ENCODE measurements at regions of chr6 and their contacts with region 1.

Region 1: GRCh38 chr6:114108119-114109002 is 137.4 kb upstream of the HDAC2 start:
- DNase-seq: peak; percentile 23
- H3K4me3 ChIP-seq: no peak overlapping the region
- H3K27ac ChIP-seq: no peak overlapping the region
- H3K4me1 ChIP-seq: no peaks in the 10 kb centered on the region; a peak in 2 of 4 replicates
- H3K27me3 ChIP-seq: no peaks in the 10 kb centered on the region; the same call in none of the 2 replicates
- CTCF ChIP-seq: peak; percentile 79
- EP300 ChIP-seq: no peak
- RAD21 ChIP-seq: peak; percentile 63

Region 2: DNA sequence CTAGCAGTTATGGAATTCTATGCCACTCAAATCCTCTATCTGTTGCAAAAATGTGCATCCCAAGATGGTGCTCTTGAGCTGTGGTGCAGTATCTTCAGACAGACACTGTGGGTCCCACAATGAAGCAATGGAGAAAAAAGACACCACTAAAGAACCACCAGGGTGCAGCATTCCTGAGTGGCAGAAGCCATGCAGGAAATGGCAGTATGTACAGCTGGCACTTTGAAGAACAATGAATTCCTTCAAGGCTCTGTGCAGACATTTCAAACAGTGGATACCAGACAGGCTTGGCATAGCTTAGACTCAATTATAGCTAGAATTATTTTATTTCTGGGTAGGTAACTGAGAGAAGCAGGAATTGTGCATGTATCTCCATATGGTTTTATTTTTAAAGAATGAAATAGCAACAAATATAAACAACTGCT is 113.4 kb before region 1 on chr6:
- CTCF ChIA-PET with region 1: interaction called, 26 read pairs
- POLR2A ChIA-PET with region 1: no interaction called
- DNase-seq: peak; percentile 44
- H3K4me3 ChIP-seq: peak overlapping the region in 1 of 2 experiments; percentile 46; a peak in 1 of 4 replicates
- H3K27ac ChIP-seq: peak overlapping the region; percentile 40 to 78; a peak in 3 of 4 replicates
- H3K4me1 ChIP-seq: peaks cover 9 to 24% of the 10 kb centered on the region in 2 experiments
- H3K27me3 ChIP-seq: no peaks in the 10 kb centered on the region
- CTCF ChIP-seq: peak; percentile 92
- EP300 ChIP-seq: no peak
- RAD21 ChIP-seq: peak; percentile 87

Region 3: DNA sequence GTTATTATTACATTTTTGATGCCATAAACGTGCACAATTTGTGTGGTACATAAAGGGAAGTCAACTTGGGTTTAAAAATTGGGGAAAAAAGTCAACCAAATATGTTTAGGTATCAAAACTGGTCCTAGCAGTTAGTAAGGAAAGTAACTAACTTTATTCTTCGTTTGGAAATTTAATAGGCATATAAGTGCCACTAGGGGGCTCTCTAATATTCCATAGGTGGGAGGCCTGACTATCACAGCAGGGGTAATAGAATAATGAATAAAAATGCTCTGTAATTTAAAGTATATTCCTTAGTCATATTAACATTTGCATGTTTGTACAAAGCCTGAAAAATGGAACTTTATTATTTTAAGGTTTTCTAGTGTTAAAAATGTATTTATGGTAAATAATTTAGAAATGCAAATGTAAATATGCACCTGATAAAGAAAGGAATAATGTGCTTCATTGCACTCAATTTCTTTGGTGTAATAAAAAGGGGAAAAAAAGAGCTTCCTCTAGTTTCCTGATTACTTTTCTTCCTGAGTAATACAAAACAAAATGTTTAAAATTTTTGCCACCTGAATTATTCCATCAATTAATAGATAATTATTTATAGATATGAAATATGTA is 11.7 kb before region 1 on chr6:
- CTCF ChIA-PET with region 1: interaction called, 28 read pairs
- POLR2A ChIA-PET with region 1: no interaction called
- DNase-seq: peak; percentile 56
- H3K4me3 ChIP-seq: no peak overlapping the region
- H3K27ac ChIP-seq: no peak overlapping the region
- H3K4me1 ChIP-seq: no peaks in the 10 kb centered on the region
- H3K27me3 ChIP-seq: no peaks in the 10 kb centered on the region
- CTCF ChIP-seq: peak; percentile 93
- EP300 ChIP-seq: no peak
- RAD21 ChIP-seq: peak; percentile 83

Region 4: GRCh38 chr6:114119056-114119455 is 10.7 kb after region 1 on chr6:
- CTCF ChIA-PET with region 1: interaction called, 10 read pairs
- POLR2A ChIA-PET with region 1: no interaction called
- DNase-seq: no peak
- H3K4me3 ChIP-seq: no peak overlapping the region
- H3K27ac ChIP-seq: no peak overlapping the region
- H3K4me1 ChIP-seq: no peaks in the 10 kb centered on the region
- H3K27me3 ChIP-seq: no peaks in the 10 kb centered on the region; the same call in 1 of the 2 replicates
- CTCF ChIP-seq: no peak
- EP300 ChIP-seq: no peak
- RAD21 ChIP-seq: no peak

Measured in SK-N-SH (cell line).